GM12878 (cell line): ENCODE measurements at regions of chr6 and their contacts with region 1.

Region 1: GRCh38 chr6:33075568-33076405 is at the start of gene HLA-DPB1:
- DNase-seq: peak; percentile 96
- ATAC-seq: peak; percentile 81
- H3K4me3 ChIP-seq: peak within 1 kb of the TSS; percentile 82
- H3K27ac ChIP-seq: peak within 1 kb of the TSS; percentile 99
- H3K4me1 ChIP-seq: peaks cover 22% of the 10 kb centered on the region
- H3K27me3 ChIP-seq: no peaks in the 10 kb centered on the region
- CTCF ChIP-seq: no peak
- EP300 ChIP-seq: no peak
- POLR2A ChIP-seq: peak; percentile 89
- RAD21 ChIP-seq: no peak
- polyA plus RNA-seq, gene HLA-DPB1: 101 to 177 TPM

Region 2: GRCh38 chr6:32952817-32953739 is 122.7 kb before region 1 on chr6 and contains the start of gene HLA-DMA:
- CTCF ChIA-PET with region 1: interaction called, 7 read pairs
- POLR2A ChIA-PET with region 1: interaction called, 13 read pairs
- RAD21 ChIA-PET with region 1: interaction called, 3 read pairs
- SMC1A ChIA-PET with region 1: interaction called, 7 read pairs
- in situ Hi-C with region 1: no loop called
- intact Hi-C with region 1: no loop called
- DNase-seq: peak; percentile 99
- ATAC-seq: peak; percentile 94
- H3K4me3 ChIP-seq: peak within 1 kb of the TSS; percentile 98
- H3K27ac ChIP-seq: peak within 1 kb of the TSS; percentile 90
- H3K4me1 ChIP-seq: peaks cover 44% of the 10 kb centered on the region
- H3K27me3 ChIP-seq: no peaks in the 10 kb centered on the region
- CTCF ChIP-seq: peak; percentile 71 to 77 (median 74)
- EP300 ChIP-seq: peak; percentile 32 to 67; a peak in 3 of 4 replicates
- POLR2A ChIP-seq: peak; percentile 98
- RAD21 ChIP-seq: peak; percentile 46
- polyA plus RNA-seq, gene HLA-DMA: 389 to 552 TPM

Region 3: GRCh38 chr6:33029328-33030184 is 46.2 kb before region 1 on chr6:
- CTCF ChIA-PET with region 1: interaction called, 55 read pairs
- POLR2A ChIA-PET with region 1: interaction called, 330 read pairs
- RAD21 ChIA-PET with region 1: interaction called, 172 read pairs
- SMC1A ChIA-PET with region 1: interaction called, 176 read pairs
- in situ Hi-C with region 1: no loop called
- intact Hi-C with region 1: loop called (anchors 1 kb)
- DNase-seq: peak; percentile 94
- ATAC-seq: peak; percentile 89
- H3K4me3 ChIP-seq: peak overlapping the region; percentile 49
- H3K27ac ChIP-seq: peak overlapping the region; percentile 100
- H3K4me1 ChIP-seq: peaks cover 36% of the 10 kb centered on the region
- H3K27me3 ChIP-seq: no peaks in the 10 kb centered on the region
- CTCF ChIP-seq: peak in 2 of 3 experiments; percentile 4 to 22; a peak in 1 of 6 replicates
- EP300 ChIP-seq: peak; percentile 86 to 88
- POLR2A ChIP-seq: peak; percentile 83
- RAD21 ChIP-seq: peak; percentile 31; the same call in 1 of the 2 replicates

Region 4: DNA sequence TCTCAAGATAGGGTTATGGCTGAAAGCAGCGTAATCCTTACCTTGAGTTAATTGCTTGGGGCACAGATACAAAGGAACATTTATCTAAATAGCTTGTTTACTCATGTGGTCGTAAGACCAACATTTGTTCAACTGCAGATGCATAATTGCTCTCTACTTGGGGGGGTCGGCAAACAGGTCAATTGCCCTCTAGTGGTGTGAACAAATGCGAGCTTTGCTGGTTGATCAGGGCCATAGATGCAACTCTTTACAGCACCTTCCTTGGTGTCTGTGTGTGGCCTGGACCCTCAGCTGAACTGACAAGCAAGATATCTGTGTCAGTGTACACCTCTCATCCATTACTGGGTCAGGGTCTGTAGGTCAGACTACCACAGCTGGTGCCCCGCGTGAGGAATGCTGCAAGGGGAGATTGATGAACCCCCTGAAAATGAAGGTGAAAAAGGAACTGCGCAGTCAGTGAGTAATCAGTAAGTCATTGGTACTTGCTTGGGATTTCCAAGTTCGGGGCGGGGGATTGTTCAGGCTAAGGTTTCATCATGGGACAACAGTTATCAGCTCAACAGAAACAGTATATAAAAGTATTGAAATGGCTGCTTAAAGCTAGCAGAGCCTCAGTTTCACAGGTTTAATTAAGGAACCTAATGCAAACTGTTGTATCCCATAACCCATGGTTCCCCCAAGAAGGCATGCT is 26.3 kb before region 1 on chr6:
- CTCF ChIA-PET with region 1: interaction called, 20 read pairs
- POLR2A ChIA-PET with region 1: interaction called, 31 read pairs
- RAD21 ChIA-PET with region 1: interaction called, 5 read pairs
- SMC1A ChIA-PET with region 1: interaction called, 11 read pairs
- in situ Hi-C with region 1: no loop called
- intact Hi-C with region 1: no loop called
- DNase-seq: no peak
- ATAC-seq: peak; percentile 85
- H3K4me3 ChIP-seq: no peak overlapping the region
- H3K27ac ChIP-seq: no peak overlapping the region
- H3K4me1 ChIP-seq: no peaks in the 10 kb centered on the region
- H3K27me3 ChIP-seq: no peaks in the 10 kb centered on the region
- CTCF ChIP-seq: peak; percentile 23 to 54 (median 53)
- EP300 ChIP-seq: no peak
- POLR2A ChIP-seq: no peak
- RAD21 ChIP-seq: peak; percentile 43; the same call in 1 of the 2 replicates

Region 5: DNA sequence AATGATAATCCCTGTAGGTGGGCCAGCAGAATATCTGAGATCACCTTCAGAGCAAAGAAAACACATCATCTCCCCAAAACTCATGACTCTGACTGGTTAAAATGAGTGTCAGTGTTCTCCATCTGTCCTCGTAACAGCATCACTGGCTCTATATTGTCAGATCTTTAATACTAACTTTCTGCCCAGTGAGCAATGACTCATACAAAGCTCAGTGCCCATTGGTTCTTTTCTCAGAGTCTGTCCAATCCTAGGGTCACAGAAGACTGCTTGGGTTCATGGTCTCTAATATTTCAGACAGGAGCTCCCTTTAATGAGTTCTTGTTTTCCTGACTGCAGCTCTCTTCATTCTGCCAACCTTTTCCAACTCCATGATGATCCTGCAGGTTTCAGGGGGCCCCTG is 36.4 kb after region 1 on chr6:
- CTCF ChIA-PET with region 1: interaction called, 5 read pairs
- POLR2A ChIA-PET with region 1: interaction called, 63 read pairs
- RAD21 ChIA-PET with region 1: interaction called, 9 read pairs
- SMC1A ChIA-PET with region 1: interaction called, 8 read pairs
- in situ Hi-C with region 1: no loop called
- intact Hi-C with region 1: no loop called
- DNase-seq: peak; percentile 68
- ATAC-seq: peak; percentile 97
- H3K4me3 ChIP-seq: no peak overlapping the region
- H3K27ac ChIP-seq: peak overlapping the region; percentile 41
- H3K4me1 ChIP-seq: peaks cover 40% of the 10 kb centered on the region
- H3K27me3 ChIP-seq: no peaks in the 10 kb centered on the region; a peak in 2 of 4 replicates
- CTCF ChIP-seq: no peak
- EP300 ChIP-seq: no peak
- POLR2A ChIP-seq: no peak
- RAD21 ChIP-seq: no peak

Region 6: DNA sequence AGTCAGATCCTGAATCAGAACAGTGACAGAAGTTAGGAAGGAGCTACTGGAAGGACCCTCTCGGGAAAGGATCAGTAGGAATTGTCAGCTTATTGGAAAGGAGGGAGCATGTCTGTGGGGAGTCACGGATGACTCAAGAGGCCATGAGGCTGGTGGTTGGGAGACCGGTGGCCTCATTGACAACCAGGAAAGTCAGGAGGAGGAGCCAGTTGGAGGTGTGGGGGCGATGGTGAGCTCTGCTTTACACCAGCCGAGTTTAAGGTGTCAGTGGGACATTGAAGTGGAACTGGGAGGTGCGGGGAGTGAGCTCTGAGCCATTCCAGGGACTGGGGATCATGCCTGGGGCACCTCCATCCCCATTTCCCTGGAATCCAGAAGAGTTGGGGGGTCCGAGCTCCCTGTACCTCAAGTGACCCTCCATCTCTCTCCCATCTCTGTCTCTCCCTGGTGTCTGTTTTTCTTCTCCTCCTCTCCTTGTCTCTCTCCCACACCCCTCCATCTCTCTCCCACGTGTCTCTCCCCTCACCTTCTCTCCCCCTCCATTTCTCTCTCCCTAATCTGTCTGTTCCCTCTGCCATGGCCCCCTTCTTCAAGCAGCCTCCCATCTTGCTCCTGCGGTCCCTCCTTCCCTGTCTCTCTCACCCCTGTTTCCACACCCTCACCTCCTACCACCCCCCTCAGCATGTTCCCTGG is 364.3 kb after region 1 on chr6:
- CTCF ChIA-PET with region 1: no interaction called
- POLR2A ChIA-PET with region 1: no interaction called
- RAD21 ChIA-PET with region 1: no interaction called
- SMC1A ChIA-PET with region 1: no interaction called
- in situ Hi-C with region 1: no loop called
- intact Hi-C with region 1: no loop called
- DNase-seq: no peak
- ATAC-seq: no peak
- H3K4me3 ChIP-seq: no peak overlapping the region
- H3K27ac ChIP-seq: no peak overlapping the region
- H3K4me1 ChIP-seq: no peaks in the 10 kb centered on the region
- H3K27me3 ChIP-seq: no peaks in the 10 kb centered on the region
- CTCF ChIP-seq: no peak
- EP300 ChIP-seq: no peak
- POLR2A ChIP-seq: no peak
- RAD21 ChIP-seq: no peak

Region 7: GRCh38 chr6:34656378-34657036 is 1580.7 kb after region 1 on chr6:
- CTCF ChIA-PET with region 1: no interaction called
- POLR2A ChIA-PET with region 1: no interaction called
- RAD21 ChIA-PET with region 1: no interaction called
- SMC1A ChIA-PET with region 1: no interaction called
- in situ Hi-C with region 1: loop called (anchors 25 kb)
- intact Hi-C with region 1: no loop called
- DNase-seq: peak; percentile 97
- ATAC-seq: peak; percentile 89
- H3K4me3 ChIP-seq: peak overlapping the region; percentile 58; the same call in 1 of the 2 replicates
- H3K27ac ChIP-seq: peak overlapping the region; percentile 100
- H3K4me1 ChIP-seq: peaks cover 60% of the 10 kb centered on the region
- H3K27me3 ChIP-seq: no peaks in the 10 kb centered on the region
- CTCF ChIP-seq: no peak
- EP300 ChIP-seq: peak; percentile 95 to 98
- POLR2A ChIP-seq: peak; percentile 57
- RAD21 ChIP-seq: peak; percentile 19; the same call in 1 of the 2 replicates